ENCODE measurements at regions of chr3 and their contacts with region 1.

Region 1: DNA sequence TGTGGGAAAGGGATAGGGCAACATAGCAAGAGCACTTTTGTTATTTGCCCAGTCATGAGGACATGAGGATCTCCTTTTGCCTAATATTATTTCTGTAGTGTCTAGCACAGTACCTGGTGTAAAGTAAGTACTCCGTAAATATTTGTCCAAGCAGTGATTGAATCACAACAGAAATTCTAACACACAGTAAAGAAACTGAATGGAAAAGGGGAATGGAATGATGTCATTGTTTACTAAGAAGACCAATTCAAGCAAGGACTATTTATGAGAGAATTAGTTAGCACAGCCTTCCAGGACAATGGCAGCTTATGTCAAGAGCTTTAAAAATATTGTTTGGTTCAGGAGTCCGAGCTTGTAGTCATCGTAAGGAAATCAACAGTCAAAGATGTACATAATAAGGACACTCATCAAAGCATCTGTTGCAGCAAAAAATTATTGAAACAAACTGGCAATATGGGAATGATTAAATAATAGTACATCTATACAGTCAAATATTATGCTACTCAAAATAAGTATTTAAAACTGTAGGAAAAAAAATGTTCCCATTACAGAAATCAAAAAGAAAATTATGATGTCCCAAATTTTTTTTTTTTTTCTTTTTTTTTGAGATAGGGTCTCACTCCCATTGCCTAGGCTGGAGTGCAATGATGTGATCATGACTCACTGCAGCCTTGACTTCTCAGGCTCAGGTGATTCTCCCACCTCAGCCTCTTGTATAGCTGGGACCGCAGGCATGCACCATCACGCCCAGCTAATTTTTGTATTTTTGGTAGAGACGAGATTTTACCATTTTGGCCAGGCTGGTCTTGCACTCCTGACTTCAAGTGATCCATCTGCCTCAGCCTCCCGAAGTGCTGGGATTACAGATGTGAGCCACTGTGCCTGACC is 17.9 kb downstream of the CAPN7 start:
- DNase-seq: no peak
- ATAC-seq: no peak
- H3K4me3 Mint-ChIP-seq: no peak overlapping the region
- H3K27ac Mint-ChIP-seq: no peak overlapping the region
- H3K4me1 Mint-ChIP-seq: no peaks in the 10 kb centered on the region
- H3K27me3 Mint-ChIP-seq: no peaks in the 10 kb centered on the region
- CTCF ChIP-seq: no peak

Region 2: DNA sequence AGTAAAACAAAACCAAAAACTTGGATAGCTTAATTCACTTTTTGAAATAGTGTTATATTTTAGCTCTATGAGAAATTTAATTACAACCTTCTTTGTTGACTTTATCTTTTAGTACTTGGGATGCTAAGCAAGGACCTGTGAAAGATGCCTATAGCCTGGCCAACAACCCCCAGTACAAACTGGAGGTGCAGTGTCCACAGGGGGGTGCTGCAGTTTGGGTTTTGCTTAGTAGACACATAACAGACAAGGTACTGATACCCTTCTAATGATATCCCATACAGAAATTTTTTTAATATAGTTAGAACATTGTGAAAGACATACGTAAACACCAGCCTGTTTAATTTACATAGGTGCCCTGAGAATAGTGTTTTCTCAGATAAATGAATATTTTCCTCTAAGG is 17.4 kb after region 1 on chr3:
- CTCF ChIA-PET with region 1: interaction called, 3 read pairs
- POLR2A ChIA-PET with region 1: no interaction called
- intact Hi-C with region 1: loop called (anchors 2 kb)
- DNase-seq: no peak
- ATAC-seq: peak; percentile 65
- H3K4me3 Mint-ChIP-seq: no peak overlapping the region
- H3K27ac Mint-ChIP-seq: no peak overlapping the region
- H3K4me1 Mint-ChIP-seq: no peaks in the 10 kb centered on the region
- H3K27me3 Mint-ChIP-seq: no peaks in the 10 kb centered on the region
- CTCF ChIP-seq: no peak

Measured in activated B cell treated with CpG ODN at 0.5 μM for 24 hours (primary cell).